Psoas muscle (tissue), 8 donors: ENCODE measurements at regions of chr9 and their contacts with region 1.

Region 1: DNA sequence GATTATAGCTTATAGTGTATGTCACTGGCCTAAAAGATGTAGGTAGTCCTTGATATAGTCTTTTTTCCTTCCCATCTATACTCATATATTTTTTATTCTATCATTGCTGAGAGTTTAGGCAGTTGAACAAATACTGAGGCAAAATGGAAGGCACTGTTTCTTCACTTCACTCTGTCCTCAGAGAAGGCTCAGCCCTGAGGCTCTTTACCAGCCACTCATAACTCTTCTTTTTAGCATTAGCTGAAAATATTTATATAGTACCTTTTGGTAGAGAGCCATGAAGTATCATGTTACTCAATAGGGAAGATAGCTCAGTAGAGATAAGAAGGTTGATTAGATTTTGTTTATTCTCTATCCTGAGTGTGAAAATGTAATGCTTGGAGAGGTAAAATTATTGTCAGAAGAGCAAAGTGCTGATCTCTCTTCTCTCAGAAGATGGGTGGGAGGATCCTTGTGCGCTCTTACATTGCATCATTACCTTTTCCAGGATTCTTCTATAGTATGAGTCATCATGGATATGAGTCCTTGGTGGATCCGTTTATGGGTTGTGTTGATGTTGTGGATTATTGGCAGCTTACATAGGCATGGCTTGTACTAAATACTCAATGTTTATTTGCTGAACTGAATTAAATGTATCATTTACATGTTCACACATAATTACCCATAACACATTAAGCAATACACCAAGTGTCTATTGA is 88.1 kb downstream of the ANXA1 start:
- DNase-seq: no peak
- ATAC-seq: no peak
- H3K4me3 ChIP-seq: no peak overlapping the region
- H3K27ac ChIP-seq: no peak overlapping the region
- H3K4me1 ChIP-seq: no peaks in the 10 kb centered on the region
- H3K27me3 ChIP-seq: no peaks in the 10 kb centered on the region
- CTCF ChIP-seq: no peak

Region 2: DNA sequence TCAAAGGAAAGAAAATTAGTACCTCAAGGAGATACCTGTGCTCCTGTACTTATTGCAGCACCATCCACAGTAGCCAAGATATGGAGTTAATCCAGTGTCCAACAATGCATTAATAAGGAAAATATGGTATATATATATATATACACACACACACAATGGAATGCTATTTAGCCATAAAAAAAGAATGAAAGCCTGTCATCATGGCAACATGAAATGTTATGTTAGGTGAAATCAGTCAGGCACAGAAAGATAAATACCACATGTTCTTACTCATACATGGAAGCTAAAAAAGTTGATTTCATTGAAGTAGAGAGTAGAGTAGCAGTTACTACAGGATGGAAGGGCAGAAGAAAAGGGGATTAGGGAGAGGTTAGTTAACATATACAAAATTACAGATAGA is 513.5 kb after region 1 on chr9:
- intact Hi-C with region 1: loop called in 1 of 2 experiments (anchors 5 kb)
- DNase-seq: no peak
- ATAC-seq: no peak
- H3K4me3 ChIP-seq: no peak overlapping the region
- H3K27ac ChIP-seq: no peak overlapping the region
- H3K4me1 ChIP-seq: no peaks in the 10 kb centered on the region
- H3K27me3 ChIP-seq: no peaks in the 10 kb centered on the region
- CTCF ChIP-seq: no peak